Activated B cell treated with CpG ODN at 0.5 μM for 24 hours (primary cell): ENCODE measurements at regions of chr5 and their contacts with region 1.

Region 1: GRCh38 chr5:111092062-111092853 is at the start of gene WDR36:
- DNase-seq: peak; percentile 88
- ATAC-seq: peak; percentile 95
- H3K4me3 Mint-ChIP-seq: peak within 1 kb of the TSS; percentile 96
- H3K27ac Mint-ChIP-seq: peak within 1 kb of the TSS; percentile 90
- H3K4me1 Mint-ChIP-seq: peaks cover 31% of the 10 kb centered on the region
- H3K27me3 Mint-ChIP-seq: peaks cover 6% of the 10 kb centered on the region
- CTCF ChIP-seq: no peak
- total RNA-seq, gene WDR36: 42.6 and 48.6 TPM in 2 replicates

Region 2: DNA sequence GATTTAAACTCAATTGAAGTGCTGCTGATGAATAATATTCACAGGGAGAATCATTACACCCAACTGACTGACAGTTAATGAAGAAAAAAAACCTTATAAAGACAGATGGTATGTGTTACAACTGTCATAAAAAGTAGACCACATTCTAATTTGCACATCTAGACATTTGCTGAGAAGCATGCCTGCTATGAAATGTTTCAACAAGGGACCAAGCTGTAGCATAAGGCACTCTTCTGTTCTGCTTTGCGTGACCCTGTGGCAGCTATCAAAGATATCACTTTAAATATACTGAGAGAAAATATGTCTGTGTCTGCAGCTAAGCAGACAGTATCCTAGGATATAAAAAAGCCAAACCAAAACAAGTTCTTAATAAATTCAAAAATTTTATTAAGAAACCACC is 519.5 kb before region 1 on chr5:
- CTCF ChIA-PET with region 1: no interaction called
- POLR2A ChIA-PET with region 1: no interaction called
- intact Hi-C with region 1: no loop called
- DNase-seq: no peak
- ATAC-seq: no peak
- H3K4me3 Mint-ChIP-seq: no peak overlapping the region
- H3K27ac Mint-ChIP-seq: no peak overlapping the region
- H3K4me1 Mint-ChIP-seq: no peaks in the 10 kb centered on the region
- H3K27me3 Mint-ChIP-seq: no peaks in the 10 kb centered on the region
- CTCF ChIP-seq: no peak

Region 3: GRCh38 chr5:111223889-111224563 is 131.8 kb after region 1 on chr5 and contains the start of gene CAMK4:
- CTCF ChIA-PET with region 1: no interaction called
- POLR2A ChIA-PET with region 1: no interaction called
- intact Hi-C with region 1: loop called (anchors 5 kb)
- DNase-seq: peak; percentile 52
- ATAC-seq: peak; percentile 88
- H3K4me3 Mint-ChIP-seq: peak within 1 kb of the TSS; percentile 82
- H3K27ac Mint-ChIP-seq: no peak within 1 kb of the TSS
- H3K4me1 Mint-ChIP-seq: peaks cover 20% of the 10 kb centered on the region
- H3K27me3 Mint-ChIP-seq: peaks cover 16% of the 10 kb centered on the region
- CTCF ChIP-seq: no peak
- total RNA-seq, gene CAMK4: 5.1 and 6.3 TPM in 2 replicates